Natural killer cell (primary cell): ENCODE measurements at regions of chrX and their contacts with region 1.

Region 1: DNA sequence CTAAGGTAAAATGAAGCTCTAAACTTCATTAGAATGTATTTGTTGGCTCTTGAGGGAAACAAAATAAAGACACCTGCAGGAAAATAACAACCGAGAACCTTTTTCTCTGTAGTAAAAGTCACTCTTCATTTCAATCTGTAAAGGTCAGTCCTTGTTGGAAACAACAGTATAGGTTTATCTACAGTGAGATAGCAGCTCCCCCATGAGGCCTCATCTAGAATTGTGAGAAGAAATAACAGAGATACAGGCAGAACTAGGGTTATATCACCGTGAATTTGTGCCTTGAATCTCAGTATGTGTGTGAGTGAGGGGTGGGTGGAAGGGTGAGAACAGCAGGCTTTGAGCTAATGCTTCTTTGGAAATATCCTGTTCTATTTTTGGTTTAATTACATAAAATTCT is 107.8 kb upstream of the FMR1 start:
- DNase-seq: peak in 1 of 2 donors; percentile 15
- ATAC-seq: peak in 1 of 3 donors; percentile 34
- H3K4me3 ChIP-seq: no peak overlapping the region
- H3K4me3 Mint-ChIP-seq: no peak overlapping the region
- H3K27ac ChIP-seq: no peak overlapping the region
- H3K27ac Mint-ChIP-seq: no peak overlapping the region
- H3K4me1 ChIP-seq: no peaks in the 10 kb centered on the region
- H3K4me1 Mint-ChIP-seq: no peaks in the 10 kb centered on the region
- H3K27me3 ChIP-seq: no peaks in the 10 kb centered on the region
- H3K27me3 Mint-ChIP-seq: no peaks in the 10 kb centered on the region
- CTCF ChIP-seq: no peak

Region 2: DNA sequence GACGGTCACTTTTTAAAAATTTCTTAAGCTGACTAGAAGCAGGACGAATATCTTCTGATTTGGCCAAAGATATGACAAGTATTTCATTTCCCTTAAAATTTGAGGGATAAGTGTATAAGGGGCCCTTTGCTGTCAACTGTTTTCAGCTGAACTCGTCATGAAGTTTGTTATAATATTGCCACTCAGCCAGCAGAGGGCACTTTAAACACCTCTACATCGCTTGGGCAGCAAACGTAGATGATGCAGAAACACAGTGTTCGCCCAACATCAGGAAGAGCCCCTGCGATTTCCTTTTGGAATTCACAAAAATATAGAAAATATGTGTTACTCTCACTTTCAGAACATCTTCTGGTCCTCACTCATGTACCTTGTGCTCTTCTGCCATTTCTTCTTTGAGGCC is 327.9 kb before region 1 on chrX:
- intact Hi-C with region 1: loop called (anchors 5 kb)
- DNase-seq: peak in 1 of 2 donors; percentile 2
- ATAC-seq: no peak
- H3K4me3 ChIP-seq: no peak overlapping the region
- H3K4me3 Mint-ChIP-seq: no peak overlapping the region
- H3K27ac ChIP-seq: no peak overlapping the region
- H3K27ac Mint-ChIP-seq: no peak overlapping the region
- H3K4me1 ChIP-seq: no peaks in the 10 kb centered on the region
- H3K4me1 Mint-ChIP-seq: no peaks in the 10 kb centered on the region
- H3K27me3 ChIP-seq: no peaks in the 10 kb centered on the region
- H3K27me3 Mint-ChIP-seq: no peaks in the 10 kb centered on the region
- CTCF ChIP-seq: no peak

Region 3: DNA sequence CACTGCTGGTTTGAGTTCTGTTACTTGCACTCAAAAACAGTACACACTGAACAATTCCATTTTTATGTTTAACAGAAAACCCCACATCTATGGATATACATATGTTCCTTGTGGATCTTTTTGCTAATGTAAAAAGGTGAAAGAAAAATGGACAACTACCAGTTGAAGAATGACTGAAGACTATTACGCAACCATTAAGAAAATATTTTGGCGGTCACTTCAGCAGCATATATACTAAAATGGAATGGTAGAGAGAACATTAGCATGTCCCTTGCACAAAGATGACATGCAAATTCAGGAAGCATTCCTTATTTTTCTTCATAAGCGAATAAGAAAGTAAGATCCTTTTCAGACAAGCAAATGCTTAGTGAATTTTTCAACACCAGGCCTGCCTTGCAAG is 23.1 kb after region 1 on chrX:
- intact Hi-C with region 1: no loop called
- DNase-seq: no peak
- ATAC-seq: no peak
- H3K4me3 ChIP-seq: no peak overlapping the region
- H3K4me3 Mint-ChIP-seq: no peak overlapping the region
- H3K27ac ChIP-seq: no peak overlapping the region
- H3K27ac Mint-ChIP-seq: no peak overlapping the region
- H3K4me1 ChIP-seq: no peaks in the 10 kb centered on the region
- H3K4me1 Mint-ChIP-seq: no peaks in the 10 kb centered on the region
- H3K27me3 ChIP-seq: no peaks in the 10 kb centered on the region
- H3K27me3 Mint-ChIP-seq: no peaks in the 10 kb centered on the region
- CTCF ChIP-seq: no peak